SK-N-SH (cell line): ENCODE measurements at regions of chr3 and their contacts with region 1.

Region 1: DNA sequence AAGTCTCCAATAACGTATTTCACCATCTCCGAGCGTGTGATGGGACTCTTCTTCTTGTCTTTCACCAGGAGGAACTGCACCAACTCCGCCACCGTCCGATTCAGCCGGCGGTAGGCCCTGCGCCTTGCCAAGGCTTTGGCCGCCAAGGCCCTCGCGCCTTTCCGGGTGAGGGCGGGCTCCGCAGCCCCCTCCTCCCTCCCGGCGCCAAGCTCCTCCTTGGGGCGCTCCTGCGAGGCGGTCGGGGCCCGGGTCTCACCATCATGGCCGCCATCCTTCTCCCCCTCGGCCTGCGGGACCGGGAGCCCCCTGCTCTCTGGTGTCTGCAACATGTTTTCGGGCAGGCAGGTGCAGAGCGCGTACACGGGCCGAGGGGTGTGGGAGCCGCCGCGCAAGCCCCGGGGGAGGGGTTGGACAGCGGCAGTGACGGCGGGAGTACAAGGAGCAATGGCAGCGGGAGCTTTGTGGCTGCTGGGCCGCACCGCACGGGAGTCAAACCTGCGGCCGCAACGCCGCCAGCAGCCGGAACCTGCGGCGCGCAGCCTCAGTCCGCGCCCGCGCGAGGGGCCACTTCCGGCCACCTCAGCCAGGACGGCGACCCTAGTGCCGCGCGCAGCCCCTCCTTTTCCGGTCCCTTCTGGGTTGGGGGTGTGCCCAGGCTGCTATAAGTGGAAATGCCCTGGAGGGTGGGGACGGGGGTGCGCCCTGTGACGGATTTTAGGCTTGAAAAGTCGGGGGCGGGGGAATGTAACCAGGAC is at the start of gene MAGEF1:
- DNase-seq: peak; percentile 95
- H3K4me3 ChIP-seq: peak within 1 kb of the TSS; percentile 82 to 91
- H3K27ac ChIP-seq: peak within 1 kb of the TSS; percentile 69 to 99
- H3K4me1 ChIP-seq: peaks cover 9 to 21% of the 10 kb centered on the region in 2 experiments; a peak in 3 of 4 replicates
- H3K27me3 ChIP-seq: no peaks in the 10 kb centered on the region
- CTCF ChIP-seq: no peak
- EP300 ChIP-seq: peak in 1 of 2 experiments; percentile 41; a peak in 1 of 4 replicates
- RAD21 ChIP-seq: no peak
- polyA plus RNA-seq, gene MAGEF1: 38.1 and 45.2 TPM in 2 replicates

Region 2: GRCh38 chr3:184459355-184459754 is 252.3 kb before region 1 on chr3:
- CTCF ChIA-PET with region 1: no interaction called
- POLR2A ChIA-PET with region 1: no interaction called
- DNase-seq: no peak
- H3K4me3 ChIP-seq: no peak overlapping the region
- H3K27ac ChIP-seq: peak overlapping the region in 1 of 2 experiments; percentile 37; a peak in 1 of 4 replicates
- H3K4me1 ChIP-seq: no peaks in the 10 kb centered on the region
- H3K27me3 ChIP-seq: no peaks in the 10 kb centered on the region
- CTCF ChIP-seq: no peak
- EP300 ChIP-seq: no peak; a peak in 1 of 4 replicates
- RAD21 ChIP-seq: no peak

Region 3: DNA sequence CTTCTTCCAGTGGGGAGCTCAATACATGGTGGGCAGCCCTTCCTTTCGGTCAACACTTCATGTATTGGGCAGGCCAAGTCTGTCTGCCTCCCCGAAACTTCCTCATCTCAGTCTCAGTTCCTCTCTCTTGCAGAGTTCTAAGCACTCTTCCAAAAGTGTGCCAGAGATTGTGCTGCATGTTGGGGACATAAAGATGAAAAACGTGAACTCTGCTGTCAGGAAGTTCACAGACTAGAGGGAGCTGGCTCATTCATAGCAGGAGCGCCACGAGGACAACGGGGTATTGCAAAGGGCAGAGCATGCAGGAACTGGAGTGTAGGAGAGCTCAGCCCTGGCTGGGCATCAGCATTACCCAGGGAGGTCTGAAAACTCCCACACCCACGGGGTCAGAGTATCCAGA is 165.4 kb before region 1 on chr3:
- CTCF ChIA-PET with region 1: no interaction called
- POLR2A ChIA-PET with region 1: no interaction called
- DNase-seq: no peak
- H3K4me3 ChIP-seq: no peak overlapping the region
- H3K27ac ChIP-seq: no peak overlapping the region
- H3K4me1 ChIP-seq: peaks cover 0 to 4% of the 10 kb centered on the region in 2 experiments; a peak in 1 of 4 replicates
- H3K27me3 ChIP-seq: peaks cover 23% of the 10 kb centered on the region; the same call in 1 of the 2 replicates
- CTCF ChIP-seq: no peak
- EP300 ChIP-seq: no peak
- RAD21 ChIP-seq: no peak

Region 4: GRCh38 chr3:184592371-184593219 is 119.1 kb before region 1 on chr3:
- CTCF ChIA-PET with region 1: interaction called, 4 read pairs
- POLR2A ChIA-PET with region 1: interaction called, 19 read pairs
- DNase-seq: peak; percentile 84
- H3K4me3 ChIP-seq: no peak overlapping the region
- H3K27ac ChIP-seq: peak overlapping the region in 1 of 2 experiments; percentile 77; a peak in 2 of 4 replicates
- H3K4me1 ChIP-seq: peaks cover 7 to 58% of the 10 kb centered on the region in 2 experiments; a peak in 3 of 4 replicates
- H3K27me3 ChIP-seq: no peaks in the 10 kb centered on the region
- CTCF ChIP-seq: no peak
- EP300 ChIP-seq: peak in 1 of 2 experiments; percentile 60; a peak in 2 of 4 replicates
- RAD21 ChIP-seq: peak; percentile 24; the same call in 1 of the 2 replicates

Region 5: DNA sequence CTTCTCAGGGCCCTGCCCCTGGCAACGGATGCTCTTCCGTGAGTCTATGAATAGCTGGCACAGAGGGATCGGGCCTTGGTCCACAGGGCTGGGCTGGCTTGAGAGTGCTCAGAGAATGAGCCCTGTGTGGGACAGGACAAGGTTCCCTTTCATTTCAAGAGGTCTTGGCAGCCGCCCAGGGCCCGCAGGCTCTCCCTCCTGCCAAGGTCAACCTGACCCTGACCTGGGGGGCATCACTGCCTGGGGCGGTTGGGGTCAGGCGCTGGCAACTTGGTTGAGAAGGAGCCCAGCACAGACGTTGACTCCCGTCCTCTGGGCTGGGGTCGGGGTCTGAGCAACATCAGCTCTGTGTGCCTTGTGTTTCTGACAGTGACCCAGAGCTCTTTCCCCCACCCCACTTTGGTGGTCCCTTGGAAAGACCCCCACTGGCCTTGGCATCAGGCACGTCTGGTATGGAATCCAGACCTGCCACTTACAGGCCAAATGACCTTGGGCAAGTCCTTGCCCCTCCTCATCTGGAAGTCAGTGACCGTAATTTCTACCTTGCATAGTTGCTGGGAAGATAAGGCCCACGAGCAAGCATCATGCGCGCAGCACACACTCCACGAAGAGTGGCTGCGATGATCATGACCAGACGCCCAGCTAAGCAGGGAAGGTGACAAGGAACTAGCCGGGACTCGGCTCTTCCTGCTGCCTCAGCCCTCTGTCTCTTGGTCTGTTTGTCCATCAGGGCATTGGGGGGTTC is 113.7 kb before region 1 on chr3:
- CTCF ChIA-PET with region 1: interaction called, 4 read pairs
- POLR2A ChIA-PET with region 1: interaction called, 19 read pairs
- DNase-seq: no peak
- H3K4me3 ChIP-seq: no peak overlapping the region; a peak in 1 of 4 replicates
- H3K27ac ChIP-seq: peak overlapping the region in 1 of 2 experiments; percentile 98; a peak in 2 of 4 replicates
- H3K4me1 ChIP-seq: peaks cover 0 to 68% of the 10 kb centered on the region in 2 experiments; a peak in 2 of 4 replicates
- H3K27me3 ChIP-seq: no peaks in the 10 kb centered on the region
- CTCF ChIP-seq: no peak
- EP300 ChIP-seq: peak in 1 of 2 experiments; percentile 44; a peak in 1 of 4 replicates
- RAD21 ChIP-seq: no peak

Region 6: GRCh38 chr3:184688251-184688881 is 23.3 kb before region 1 on chr3:
- CTCF ChIA-PET with region 1: interaction called, 3 read pairs
- POLR2A ChIA-PET with region 1: interaction called, 10 read pairs
- DNase-seq: peak; percentile 25
- H3K4me3 ChIP-seq: no peak overlapping the region
- H3K27ac ChIP-seq: no peak overlapping the region
- H3K4me1 ChIP-seq: peaks cover 0 to 29% of the 10 kb centered on the region in 2 experiments; a peak in 2 of 4 replicates
- H3K27me3 ChIP-seq: no peaks in the 10 kb centered on the region
- CTCF ChIP-seq: no peak
- EP300 ChIP-seq: no peak
- RAD21 ChIP-seq: no peak

Region 7: DNA sequence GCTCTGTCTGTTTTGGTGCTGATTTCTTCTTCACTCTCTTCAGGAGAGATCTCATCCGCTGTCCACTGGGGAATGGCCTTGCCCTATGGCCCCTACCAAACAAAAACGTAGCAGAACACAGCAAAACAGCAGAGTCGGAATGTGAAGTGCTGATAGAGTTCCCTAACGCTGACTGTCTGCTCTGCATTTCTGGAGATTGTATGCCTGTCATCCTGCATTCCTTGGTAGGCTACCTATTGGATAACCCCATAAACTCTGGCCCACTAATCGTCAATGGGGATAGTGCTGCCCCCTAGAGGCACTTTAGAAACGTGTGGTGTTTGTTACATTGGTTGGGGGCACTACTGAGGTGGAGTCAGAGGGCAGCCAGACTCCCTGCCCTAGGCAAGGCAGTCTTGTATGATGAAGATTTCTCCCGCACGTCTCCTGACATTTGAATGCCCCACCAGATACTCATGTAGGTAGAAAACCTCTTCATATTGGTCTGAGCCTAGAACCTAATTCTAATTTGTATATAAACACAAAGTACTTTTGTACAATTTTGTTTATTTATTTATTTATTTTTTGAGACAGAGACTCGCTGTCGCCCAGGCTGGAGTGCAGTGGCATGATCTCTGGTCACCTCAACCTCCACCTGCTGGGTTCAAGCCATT is 15.8 kb after region 1 on chr3:
- CTCF ChIA-PET with region 1: interaction called, 39 read pairs
- POLR2A ChIA-PET with region 1: interaction called, 8 read pairs
- DNase-seq: peak; percentile 88
- H3K4me3 ChIP-seq: peak overlapping the region in 1 of 2 experiments; percentile 43; a peak in 1 of 4 replicates
- H3K27ac ChIP-seq: peak overlapping the region in 1 of 2 experiments; percentile 50; a peak in 2 of 4 replicates
- H3K4me1 ChIP-seq: peaks cover 0 to 22% of the 10 kb centered on the region in 2 experiments; a peak in 2 of 4 replicates
- H3K27me3 ChIP-seq: no peaks in the 10 kb centered on the region
- CTCF ChIP-seq: peak; percentile 86
- EP300 ChIP-seq: no peak
- RAD21 ChIP-seq: peak; percentile 87

Region 8: DNA sequence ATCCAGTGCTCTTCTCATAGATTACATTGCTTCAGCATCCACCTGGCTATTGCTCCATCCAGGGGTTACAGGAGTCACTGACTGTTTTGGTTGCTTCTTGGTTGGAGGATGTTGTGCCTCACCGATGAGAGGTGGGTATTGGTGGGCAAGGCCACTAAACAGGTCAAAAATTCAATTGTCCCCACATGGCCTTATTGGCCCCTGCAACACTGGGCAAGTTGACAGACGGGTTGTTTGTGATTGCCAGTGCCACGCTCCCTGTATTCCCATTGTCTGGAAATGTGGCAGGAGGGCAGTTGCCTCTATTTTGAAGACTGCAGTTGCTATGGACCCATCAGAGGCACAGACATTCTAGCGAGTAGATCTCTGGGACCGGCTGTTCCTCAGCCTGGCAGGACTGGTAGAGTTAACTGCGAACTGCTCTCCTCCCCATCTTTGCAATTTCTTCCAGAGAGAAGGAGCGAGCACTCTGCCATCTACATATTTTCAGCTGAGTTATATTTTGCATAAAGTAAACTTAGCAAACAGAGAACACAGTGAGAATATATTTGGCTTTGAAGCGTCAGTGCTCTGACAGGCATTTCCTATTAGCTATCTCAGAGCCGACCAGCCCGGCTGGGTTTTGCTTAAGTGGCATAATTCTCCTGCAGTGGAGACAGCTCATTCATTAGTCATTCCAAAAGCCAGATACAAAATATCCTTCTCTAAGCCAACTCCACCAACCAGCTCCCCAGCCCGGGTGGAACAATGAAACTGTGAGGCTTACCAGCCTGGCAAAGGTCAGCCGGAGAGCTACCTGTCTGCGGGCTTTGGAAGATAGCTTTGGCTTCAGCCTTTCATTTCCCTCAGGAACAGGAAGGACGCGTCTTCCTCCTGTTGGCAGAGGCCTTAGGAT is 26.2 kb after region 1 on chr3:
- CTCF ChIA-PET with region 1: interaction called, 4 read pairs
- POLR2A ChIA-PET with region 1: interaction called, 14 read pairs
- DNase-seq: no peak
- H3K4me3 ChIP-seq: no peak overlapping the region
- H3K27ac ChIP-seq: no peak overlapping the region
- H3K4me1 ChIP-seq: peaks cover 14 to 15% of the 10 kb centered on the region in 2 experiments; a peak in 2 of 4 replicates
- H3K27me3 ChIP-seq: no peaks in the 10 kb centered on the region
- CTCF ChIP-seq: no peak
- EP300 ChIP-seq: no peak
- RAD21 ChIP-seq: no peak

Region 9: DNA sequence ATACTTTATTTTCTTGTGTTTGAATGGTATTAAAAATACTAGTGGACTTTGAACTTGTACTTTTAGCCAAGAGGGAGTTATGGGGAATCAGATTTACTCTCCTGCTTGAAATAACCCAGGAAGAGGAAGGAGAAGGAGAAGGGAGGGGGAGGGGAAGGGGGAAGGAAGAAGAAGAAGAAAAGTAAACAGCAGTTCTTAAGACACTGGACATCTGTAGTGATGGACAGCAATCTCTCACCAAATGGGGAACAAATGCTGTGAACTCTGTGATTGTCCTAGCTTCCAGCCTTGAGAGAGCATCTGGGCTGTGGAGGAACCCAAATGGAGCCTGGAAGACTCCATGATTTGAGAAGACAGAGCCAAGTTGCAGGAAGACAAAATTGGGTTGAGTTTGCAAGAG is 152.3 kb after region 1 on chr3:
- CTCF ChIA-PET with region 1: no interaction called
- POLR2A ChIA-PET with region 1: no interaction called
- DNase-seq: no peak
- H3K4me3 ChIP-seq: no peak overlapping the region
- H3K27ac ChIP-seq: no peak overlapping the region
- H3K4me1 ChIP-seq: no peaks in the 10 kb centered on the region
- H3K27me3 ChIP-seq: no peaks in the 10 kb centered on the region
- CTCF ChIP-seq: no peak
- EP300 ChIP-seq: no peak
- RAD21 ChIP-seq: no peak

Region 10: GRCh38 chr3:184949251-184949969 is 237.7 kb after region 1 on chr3:
- CTCF ChIA-PET with region 1: no interaction called
- POLR2A ChIA-PET with region 1: no interaction called
- DNase-seq: no peak
- H3K4me3 ChIP-seq: no peak overlapping the region
- H3K27ac ChIP-seq: no peak overlapping the region
- H3K4me1 ChIP-seq: peaks cover 0 to 16% of the 10 kb centered on the region in 2 experiments; a peak in 2 of 4 replicates
- H3K27me3 ChIP-seq: no peaks in the 10 kb centered on the region
- CTCF ChIP-seq: no peak
- EP300 ChIP-seq: no peak
- RAD21 ChIP-seq: no peak